AG04449 (cell line): ENCODE measurements at regions of chr1 and their contacts with region 1.

Region 1: DNA sequence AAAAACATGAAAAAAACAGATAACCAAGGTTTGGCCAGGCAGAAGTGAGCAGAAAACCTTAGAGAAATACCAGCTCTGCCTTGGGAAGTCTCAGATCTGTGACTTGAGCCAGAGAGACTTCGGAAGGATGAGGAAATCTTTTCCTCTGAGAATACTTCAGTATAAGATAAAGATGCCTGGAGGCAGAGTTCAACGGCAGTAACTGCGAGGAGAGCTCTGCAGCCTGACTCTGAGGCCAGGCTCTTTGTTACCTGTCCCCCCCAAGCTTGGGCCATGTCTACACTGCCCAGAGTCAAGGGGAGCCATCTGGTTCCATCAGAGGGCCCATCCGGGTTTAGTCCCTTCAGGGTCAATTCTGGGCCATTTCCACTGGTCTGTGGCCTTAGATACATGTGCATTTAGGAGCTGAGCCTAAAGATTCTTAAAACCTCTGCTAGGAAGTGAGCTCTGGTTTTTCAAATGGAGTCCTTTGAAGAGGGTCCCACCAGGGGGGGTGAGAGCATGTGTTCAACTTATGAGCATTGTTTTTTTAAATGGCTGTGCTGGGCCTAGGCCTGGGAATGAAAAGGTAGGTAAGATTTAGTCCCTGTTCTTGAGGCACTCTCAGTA is 8.7 kb downstream of the KIRREL1 start:
- DNase-seq: no peak
- H3K4me3 ChIP-seq: no peak overlapping the region; the same call in 1 of the 2 replicates
- CTCF ChIP-seq: no peak

Region 2: GRCh38 chr1:158013840-158014730 is 12.0 kb after region 1 on chr1:
- CTCF ChIA-PET with region 1: interaction called, 94 read pairs
- POLR2A ChIA-PET with region 1: interaction called, 9 read pairs
- DNase-seq: no peak
- H3K4me3 ChIP-seq: no peak overlapping the region
- CTCF ChIP-seq: no peak

Region 3: DNA sequence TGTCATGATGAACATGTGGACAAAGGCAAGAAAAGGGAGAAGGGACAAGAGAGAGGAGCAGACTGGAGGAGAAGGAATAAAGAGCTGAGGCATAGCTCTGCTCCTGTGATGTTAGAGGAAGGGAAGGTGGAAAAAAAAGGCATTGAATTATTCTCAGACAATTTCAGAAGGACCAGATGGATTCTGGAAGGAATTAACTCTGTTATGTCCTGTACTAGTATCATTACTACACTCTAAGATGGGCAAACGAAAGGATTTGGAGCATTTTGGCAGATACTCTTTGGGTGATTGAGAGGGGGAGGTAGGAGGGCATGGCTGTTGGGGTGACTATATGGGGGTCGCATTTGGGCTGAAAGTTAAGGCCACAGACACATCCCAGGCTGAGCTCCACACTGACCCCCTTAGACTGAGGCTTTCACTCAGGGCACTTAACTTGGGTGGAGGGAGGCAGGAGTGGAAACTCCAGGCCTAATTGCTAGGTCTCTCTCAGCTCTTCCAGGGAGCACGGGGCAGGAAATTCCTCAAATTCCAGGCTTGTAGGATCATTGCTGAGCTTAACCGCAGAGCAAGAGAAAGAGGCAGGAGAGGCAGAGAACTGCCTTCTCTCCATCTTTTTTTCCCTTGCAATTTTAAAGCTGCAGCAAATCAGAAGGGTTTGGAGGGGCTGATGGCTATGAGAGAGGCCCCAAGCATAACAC is 17.2 kb after region 1 on chr1:
- CTCF ChIA-PET with region 1: interaction called, 94 read pairs
- POLR2A ChIA-PET with region 1: interaction called, 8 read pairs
- DNase-seq: peak; percentile 86
- H3K4me3 ChIP-seq: peak overlapping the region; percentile 41
- CTCF ChIP-seq: no peak

Region 4: GRCh38 chr1:158212320-158212719 is 210.2 kb after region 1 on chr1:
- CTCF ChIA-PET with region 1: no interaction called
- POLR2A ChIA-PET with region 1: no interaction called
- DNase-seq: no peak
- H3K4me3 ChIP-seq: no peak overlapping the region
- CTCF ChIP-seq: no peak